Heart left ventricle (tissue), 16 donors: ENCODE measurements at regions of chr1 and their contacts with region 1.

Region 1: DNA sequence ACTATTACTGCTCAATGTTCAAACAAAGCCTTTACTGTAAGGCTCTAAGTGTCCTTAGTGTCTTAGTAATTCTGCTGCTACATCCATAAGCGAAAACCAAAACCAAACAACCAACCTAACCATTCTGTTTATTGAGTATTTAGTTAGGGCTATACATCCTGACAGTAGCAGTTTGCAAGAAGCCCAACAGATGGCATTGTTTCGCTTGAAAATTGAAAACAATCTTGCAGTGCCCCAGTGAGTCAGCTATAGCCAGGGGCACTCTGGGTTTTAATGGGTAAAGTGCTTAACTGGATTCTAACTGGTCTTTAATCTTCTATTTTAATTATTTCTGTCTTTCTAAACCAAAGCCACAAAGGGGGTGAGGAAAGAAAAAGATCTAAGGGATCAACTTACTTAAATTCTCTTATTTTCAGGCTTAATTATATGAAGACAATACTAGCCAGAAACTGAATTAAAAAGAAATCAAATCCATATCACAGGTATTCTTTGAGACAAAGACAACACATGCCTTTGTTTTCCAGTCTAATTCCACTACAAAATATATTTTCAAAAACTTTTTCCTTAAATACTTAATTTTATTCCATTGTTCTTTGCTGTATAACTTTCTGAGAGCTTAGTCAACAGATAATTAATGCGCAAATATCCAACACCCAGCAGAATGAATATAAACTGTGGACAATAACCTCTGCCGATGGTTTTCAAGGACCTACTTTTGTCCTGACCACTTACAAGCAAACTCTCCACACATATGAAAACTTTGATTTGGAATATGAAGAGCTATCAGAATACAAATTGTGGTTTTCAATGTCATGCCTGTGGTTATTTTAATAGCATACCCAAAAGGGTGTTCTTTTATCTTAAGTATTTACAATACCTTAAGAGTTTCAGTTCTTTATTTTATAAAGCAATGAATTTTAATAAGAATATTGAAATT is 15.2 kb downstream of the POGZ start:
- DNase-seq: peak in 3 of 5 donors; percentile 29 to 47 (median 39)
- ATAC-seq: peak; percentile 57 to 88 (median 84)
- H3K4me3 ChIP-seq: no peak overlapping the region
- H3K27ac ChIP-seq: peak overlapping the region in 3 of 12 donors; percentile 5 to 46 (median 42)
- H3K4me1 ChIP-seq: peaks cover 0 to 51% (median 33%) of the 10 kb centered on the region in 12 donors
- H3K27me3 ChIP-seq: no peaks in the 10 kb centered on the region
- CTCF ChIP-seq: peak; percentile 47 to 83 (median 70)
- POLR2A ChIP-seq: no peak

Region 2: DNA sequence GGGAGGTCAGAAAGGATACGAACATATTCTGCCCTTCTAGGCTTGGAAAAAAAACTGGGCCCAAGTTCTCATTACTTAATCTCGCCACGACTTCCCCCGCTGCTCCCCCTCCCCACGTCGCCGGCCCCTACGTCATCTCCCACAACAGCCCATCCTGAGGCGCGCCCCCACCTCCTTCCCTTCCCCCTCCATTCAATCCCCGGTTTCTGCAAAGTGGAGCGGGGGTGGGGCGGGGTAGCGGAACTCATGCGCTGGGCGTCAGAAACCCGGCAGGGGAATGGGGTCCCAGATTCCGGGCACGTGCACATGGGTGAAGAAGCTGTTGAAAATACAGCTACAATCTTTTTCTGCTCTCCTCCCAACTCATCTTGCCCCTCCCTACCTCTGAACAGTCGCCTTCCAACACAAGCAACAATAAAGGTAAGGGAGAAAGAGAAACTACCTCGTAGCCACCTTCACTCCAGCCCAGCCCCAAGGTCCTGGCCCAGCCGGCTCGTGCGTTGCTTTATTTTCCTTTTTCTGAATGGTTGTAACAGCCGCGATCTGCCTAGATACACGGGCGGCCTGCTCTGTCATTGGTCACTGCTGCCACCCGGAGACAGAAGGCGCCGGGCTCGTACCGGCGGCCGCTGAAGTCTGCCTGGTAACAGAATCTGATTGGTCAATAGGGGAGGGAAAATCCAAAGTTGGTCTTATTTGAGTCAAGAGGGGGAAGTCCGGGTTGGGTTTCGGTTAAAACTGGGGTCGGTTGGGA is 97.2 kb before region 1 on chr1 and contains the start of gene RFX5:
- intact Hi-C with region 1: no loop called
- DNase-seq: peak; percentile 94 to 96 (median 95)
- ATAC-seq: peak; percentile 98 to 99 (median 99)
- H3K4me3 ChIP-seq: peak within 1 kb of the TSS; percentile 55 to 95 (median 76)
- H3K27ac ChIP-seq: peak within 1 kb of the TSS; percentile 79 to 96 (median 90)
- H3K4me1 ChIP-seq: peaks cover 0 to 26% (median 9%) of the 10 kb centered on the region in 12 donors
- H3K27me3 ChIP-seq: no peaks in the 10 kb centered on the region
- CTCF ChIP-seq: peak in 1 of 12 donors; percentile 16
- POLR2A ChIP-seq: peak in 1 of 2 donors; percentile 63
- total RNA-seq, gene RFX5: 14.0 to 49.3 (median 22.1) TPM

Region 3: DNA sequence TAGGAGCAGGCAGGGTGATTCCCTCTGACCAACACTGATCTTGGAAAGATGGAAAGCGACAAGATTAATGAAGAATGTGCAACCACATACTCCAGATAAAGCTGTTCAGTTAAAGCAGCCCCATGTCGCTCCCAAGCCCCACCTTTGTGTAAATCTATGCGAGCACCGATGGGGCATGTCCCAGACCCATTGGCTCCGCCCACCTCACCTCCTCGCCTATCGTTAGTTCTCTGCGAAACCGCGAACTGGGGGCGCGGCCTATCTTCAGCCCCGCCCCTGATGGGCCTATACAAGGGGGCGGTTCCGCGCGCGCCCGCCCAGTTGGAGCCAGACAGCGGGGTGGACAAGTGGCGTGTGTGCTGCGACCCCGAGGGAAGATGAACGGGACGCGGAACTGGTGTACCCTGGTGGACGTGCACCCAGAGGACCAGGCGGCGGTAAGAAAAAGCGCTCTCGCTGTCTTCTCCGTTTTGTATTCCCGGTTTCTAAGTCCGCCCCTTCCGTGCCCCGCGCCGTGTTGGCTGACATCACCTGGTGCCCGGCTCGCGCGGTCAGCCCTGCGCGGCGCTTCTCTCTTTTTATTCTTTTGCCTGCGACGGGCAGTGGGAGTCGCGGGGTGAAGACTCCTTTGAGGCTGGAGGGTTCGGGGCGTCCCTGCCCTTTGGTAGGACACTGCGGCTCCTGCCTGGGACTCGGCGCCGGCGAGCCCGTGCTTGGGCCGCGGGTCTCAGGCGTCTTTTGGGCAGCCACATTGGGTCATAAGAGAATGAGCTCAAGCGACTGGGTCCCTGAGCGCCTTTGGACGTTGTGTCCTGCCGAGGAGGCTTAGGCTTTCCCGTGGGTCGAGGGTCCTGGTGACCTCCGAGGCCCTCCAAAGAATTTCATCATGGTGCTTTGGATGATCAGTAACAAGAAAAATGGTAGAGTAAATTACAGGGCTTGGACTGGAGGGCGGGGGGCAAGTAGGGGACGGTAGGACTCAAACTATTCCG is 96.2 kb after region 1 on chr1 and contains the start of gene TUFT1:
- intact Hi-C with region 1: loop called in 3 of 10 experiments (anchors 10 kb)
- DNase-seq: peak; percentile 89 to 94 (median 94)
- ATAC-seq: peak; percentile 96 to 98 (median 98)
- H3K4me3 ChIP-seq: peak within 1 kb of the TSS; percentile 38 to 82 (median 76)
- H3K27ac ChIP-seq: peak within 1 kb of the TSS in 10 of 12 donors; percentile 28 to 86 (median 62)
- H3K4me1 ChIP-seq: peaks cover 0 to 21% (median 12%) of the 10 kb centered on the region in 12 donors
- H3K27me3 ChIP-seq: no peaks in the 10 kb centered on the region
- CTCF ChIP-seq: no peak
- POLR2A ChIP-seq: peak; percentile 83 to 88
- total RNA-seq, gene TUFT1: 2.1 to 13.6 (median 4.3) TPM

Region 4: GRCh38 chr1:151594143-151594625 is 150.1 kb after region 1 on chr1:
- intact Hi-C with region 1: loop called in 1 of 10 experiments (anchors 10 kb)
- DNase-seq: peak; percentile 60 to 84 (median 71)
- ATAC-seq: peak in 3 of 4 donors; percentile 61 to 67 (median 62)
- H3K4me3 ChIP-seq: peak overlapping the region in 3 of 12 donors; percentile 5 to 18 (median 13)
- H3K27ac ChIP-seq: no peak overlapping the region
- H3K4me1 ChIP-seq: peaks cover 0 to 7% (median 0%) of the 10 kb centered on the region in 12 donors
- H3K27me3 ChIP-seq: peaks cover 0 to 5% (median 0%) of the 10 kb centered on the region in 9 donors
- CTCF ChIP-seq: peak; percentile 79 to 94 (median 88)
- POLR2A ChIP-seq: no peak